IMR-90 (cell line): ENCODE measurements at regions of chr14 and their contacts with region 1.

Region 1: DNA sequence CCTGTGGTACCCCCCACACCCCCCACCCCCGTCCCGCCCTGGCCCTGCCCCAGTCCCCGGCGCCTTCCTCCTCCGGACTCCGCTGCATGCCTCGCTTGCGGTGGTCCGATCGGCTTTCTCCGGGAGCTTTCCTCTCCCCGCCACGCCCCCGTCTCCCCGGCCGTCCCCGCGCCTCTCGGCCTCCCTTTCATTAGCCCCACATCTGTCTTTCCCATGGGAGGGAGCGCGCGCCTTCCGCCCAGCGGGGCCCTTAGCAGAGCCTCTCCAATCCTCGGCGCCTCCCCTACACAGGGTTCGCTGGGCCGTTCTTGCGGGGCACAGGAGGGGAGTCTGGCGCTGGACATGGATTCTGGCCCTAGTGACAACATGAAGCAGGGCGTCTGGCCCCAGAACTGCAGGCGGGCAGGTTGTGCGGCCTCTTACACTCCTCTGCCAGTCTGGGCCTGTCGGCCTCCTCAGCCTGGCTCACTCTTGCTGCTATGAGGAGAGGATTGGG is 1.5 kb upstream of the EFS start:
- DNase-seq: peak; percentile 62
- ATAC-seq: peak; percentile 69
- H3K4me3 ChIP-seq: peak overlapping the region; percentile 19
- H3K27ac ChIP-seq: peak overlapping the region; percentile 89
- H3K4me1 ChIP-seq: peaks cover 7% of the 10 kb centered on the region
- H3K27me3 ChIP-seq: peaks cover 19% of the 10 kb centered on the region; the same call in 1 of the 2 replicates
- CTCF ChIP-seq: no peak
- POLR2A ChIP-seq: no peak
- RAD21 ChIP-seq: no peak

Region 2: DNA sequence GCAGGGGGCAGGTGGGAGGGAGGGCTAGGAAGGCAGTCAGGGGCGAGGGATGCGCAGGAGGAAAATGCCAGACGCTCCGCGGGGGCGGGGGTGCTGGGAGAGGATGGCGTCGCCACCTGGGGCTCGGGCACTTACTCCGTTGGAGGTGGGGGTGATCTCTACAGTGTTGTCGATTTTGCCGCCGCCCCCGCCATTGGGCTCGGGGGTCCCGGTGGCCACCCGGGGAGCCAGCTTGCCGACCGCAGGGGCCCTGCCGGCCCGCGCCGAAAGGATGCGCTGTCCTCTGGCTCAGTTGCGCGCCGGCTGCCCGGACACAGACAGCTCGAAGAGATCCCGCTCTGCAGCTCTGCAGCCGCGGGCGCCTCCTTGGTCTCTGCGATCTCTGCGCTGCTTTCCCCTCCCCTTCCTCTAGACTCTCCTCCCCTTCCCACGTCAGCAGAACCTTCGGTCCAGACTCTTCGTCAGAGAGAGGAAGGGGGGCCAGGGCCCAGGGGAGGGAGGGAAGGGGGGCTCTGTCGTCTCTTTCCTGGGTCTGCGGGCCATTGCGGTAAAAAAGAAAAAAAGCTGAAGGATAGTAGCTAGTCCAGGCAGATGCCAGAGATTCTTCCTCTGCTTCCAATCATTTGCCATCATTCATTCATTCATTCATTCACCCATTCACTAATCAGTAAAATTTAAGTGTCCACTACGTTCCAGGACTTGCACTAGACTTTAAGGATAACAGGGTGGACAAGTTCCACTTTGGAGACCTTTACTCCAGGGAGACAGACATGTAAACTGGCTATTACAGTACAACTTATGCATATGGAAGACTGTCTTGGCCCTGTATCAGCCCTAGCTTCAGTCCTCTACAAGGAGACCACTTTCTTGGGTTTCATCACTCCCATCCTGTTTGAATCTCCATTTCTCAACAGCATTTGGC is 13.7 kb before region 1 on chr14 and contains the start of gene SLC22A17:
- CTCF ChIA-PET with region 1: interaction called, 8 read pairs
- POLR2A ChIA-PET with region 1: no interaction called
- dilution Hi-C with region 1: no loop called
- in situ Hi-C with region 1: no loop called
- intact Hi-C with region 1: loop called (anchors 1 kb)
- DNase-seq: peak; percentile 92
- ATAC-seq: peak; percentile 98
- H3K4me3 ChIP-seq: peak within 1 kb of the TSS; percentile 76
- H3K27ac ChIP-seq: peak within 1 kb of the TSS; percentile 63
- H3K4me1 ChIP-seq: peaks cover 3% of the 10 kb centered on the region; the same call in 1 of the 2 replicates
- H3K27me3 ChIP-seq: no peaks in the 10 kb centered on the region
- CTCF ChIP-seq: peak; percentile 35
- POLR2A ChIP-seq: peak; percentile 88
- RAD21 ChIP-seq: peak; percentile 23
- total RNA-seq, gene SLC22A17: 6.4 and 6.6 TPM in 2 replicates